ENCODE measurements at regions of chr15 and their contacts with region 1.

Region 1: GRCh38 chr15:50576166-50576565 is 29.7 kb upstream of the USP50 start:
- DNase-seq: no peak
- H3K4me3 ChIP-seq: no peak overlapping the region
- H3K27ac ChIP-seq: no peak overlapping the region
- H3K4me1 ChIP-seq: no peaks in the 10 kb centered on the region
- H3K27me3 ChIP-seq: no peaks in the 10 kb centered on the region
- CTCF ChIP-seq: no peak
- EP300 ChIP-seq: no peak
- POLR2A ChIP-seq: no peak

Region 2: DNA sequence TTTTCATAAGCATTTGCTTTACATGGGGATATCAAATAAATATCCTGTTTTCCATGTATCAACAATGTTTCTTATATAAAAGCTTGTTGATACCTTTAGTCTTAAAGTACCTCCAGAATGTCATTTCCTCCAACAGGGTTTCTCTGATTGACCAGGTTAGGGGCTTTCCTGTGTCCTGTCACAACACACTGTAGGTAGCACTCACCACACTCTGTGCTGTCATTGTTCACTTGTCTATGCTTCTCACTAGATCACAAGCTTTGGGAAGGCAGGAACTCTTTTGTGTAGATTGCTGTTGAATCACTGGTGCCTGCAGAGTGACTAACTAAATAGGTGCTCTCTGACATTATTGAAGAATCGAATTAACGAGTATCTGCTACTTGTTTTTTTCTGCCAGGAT is 79.5 kb before region 1 on chr15:
- intact Hi-C with region 1: loop called (anchors 10 kb)
- DNase-seq: no peak
- H3K4me3 ChIP-seq: no peak overlapping the region
- H3K27ac ChIP-seq: no peak overlapping the region
- H3K4me1 ChIP-seq: no peaks in the 10 kb centered on the region
- H3K27me3 ChIP-seq: no peaks in the 10 kb centered on the region
- CTCF ChIP-seq: no peak
- EP300 ChIP-seq: no peak
- POLR2A ChIP-seq: no peak